Activated T-helper 2 cell treated with anti-CD3 and anti-CD28 coated beads, Interferon-gamma antibody, Interleukin-2, Interleukin-4, amounts not matched to agents 10 μg/mL and 5 μg/mL and 100 μg/mL, durations not matched to agents 14 hours and 24 hours and 36 hours (primary cell): ENCODE measurements at regions of chr6 and their contacts with region 1.

Region 1: GRCh38 chr6:105077596-105078385 is 102.0 kb downstream of the POPDC3 start:
- DNase-seq: no peak
- H3K4me3 Mint-ChIP-seq: no peak overlapping the region
- H3K27ac Mint-ChIP-seq: no peak overlapping the region
- H3K4me1 Mint-ChIP-seq: no peaks in the 10 kb centered on the region
- H3K27me3 Mint-ChIP-seq: peaks cover 42% of the 10 kb centered on the region

Region 2: GRCh38 chr6:104689551-104690205 is 388.1 kb before region 1 on chr6:
- intact Hi-C with region 1: loop called (anchors 5 kb)
- DNase-seq: no peak
- H3K4me3 Mint-ChIP-seq: no peak overlapping the region
- H3K27ac Mint-ChIP-seq: no peak overlapping the region
- H3K4me1 Mint-ChIP-seq: peaks cover 17% of the 10 kb centered on the region
- H3K27me3 Mint-ChIP-seq: peaks cover 2% of the 10 kb centered on the region

Region 3: GRCh38 chr6:104940881-104941728 is 136.7 kb before region 1 on chr6:
- intact Hi-C with region 1: loop called (anchors 5 kb)
- DNase-seq: peak; percentile 24
- H3K4me3 Mint-ChIP-seq: peak overlapping the region; percentile 57
- H3K27ac Mint-ChIP-seq: no peak overlapping the region
- H3K4me1 Mint-ChIP-seq: peaks cover 3% of the 10 kb centered on the region
- H3K27me3 Mint-ChIP-seq: peaks cover 37% of the 10 kb centered on the region

Region 4: DNA sequence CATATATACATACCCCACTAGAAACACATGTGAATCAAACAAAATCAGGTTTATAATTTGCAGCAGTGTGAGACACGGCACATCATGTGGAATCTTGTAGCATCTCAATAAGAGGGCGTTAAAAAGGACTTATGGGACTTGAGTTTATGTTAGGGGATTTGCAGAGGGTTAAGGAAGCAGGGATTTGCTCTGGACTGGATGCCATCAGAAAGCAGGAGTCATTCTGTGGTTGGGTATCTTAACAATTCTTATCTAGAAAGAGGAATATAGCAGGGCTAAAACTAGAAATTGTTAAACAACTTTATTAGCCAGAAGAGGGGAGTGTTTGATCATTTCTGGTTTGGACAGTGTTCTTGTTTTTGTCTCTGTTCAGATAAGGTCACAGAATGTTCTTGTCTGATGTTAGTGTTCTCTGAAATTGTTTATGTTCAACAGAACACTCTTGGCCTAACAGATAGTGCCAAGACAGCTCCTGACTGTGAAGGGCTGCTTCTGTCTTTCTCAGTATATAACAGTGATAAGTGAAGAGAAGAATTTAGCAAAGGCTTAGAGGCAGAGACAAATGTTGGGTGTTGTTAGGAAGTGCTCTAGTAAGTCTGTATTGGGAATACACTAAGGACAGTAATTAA is 81.7 kb before region 1 on chr6:
- intact Hi-C with region 1: no loop called
- DNase-seq: no peak
- H3K4me3 Mint-ChIP-seq: no peak overlapping the region
- H3K27ac Mint-ChIP-seq: no peak overlapping the region
- H3K4me1 Mint-ChIP-seq: no peaks in the 10 kb centered on the region
- H3K27me3 Mint-ChIP-seq: peaks cover 1% of the 10 kb centered on the region